ENCODE measurements at regions of chr3 and their contacts with region 1.

Region 1: GRCh38 chr3:163056874-163057497 is 1560.4 kb downstream of the OTOL1 start:
- DNase-seq: no peak
- ATAC-seq: no peak
- H3K4me3 ChIP-seq: no peak overlapping the region
- H3K4me3 Mint-ChIP-seq: no peak overlapping the region
- H3K27ac ChIP-seq: no peak overlapping the region
- H3K27ac Mint-ChIP-seq: no peak overlapping the region
- H3K4me1 ChIP-seq: no peaks in the 10 kb centered on the region
- H3K4me1 Mint-ChIP-seq: no peaks in the 10 kb centered on the region
- H3K27me3 ChIP-seq: no peaks in the 10 kb centered on the region
- H3K27me3 Mint-ChIP-seq: no peaks in the 10 kb centered on the region

Region 2: DNA sequence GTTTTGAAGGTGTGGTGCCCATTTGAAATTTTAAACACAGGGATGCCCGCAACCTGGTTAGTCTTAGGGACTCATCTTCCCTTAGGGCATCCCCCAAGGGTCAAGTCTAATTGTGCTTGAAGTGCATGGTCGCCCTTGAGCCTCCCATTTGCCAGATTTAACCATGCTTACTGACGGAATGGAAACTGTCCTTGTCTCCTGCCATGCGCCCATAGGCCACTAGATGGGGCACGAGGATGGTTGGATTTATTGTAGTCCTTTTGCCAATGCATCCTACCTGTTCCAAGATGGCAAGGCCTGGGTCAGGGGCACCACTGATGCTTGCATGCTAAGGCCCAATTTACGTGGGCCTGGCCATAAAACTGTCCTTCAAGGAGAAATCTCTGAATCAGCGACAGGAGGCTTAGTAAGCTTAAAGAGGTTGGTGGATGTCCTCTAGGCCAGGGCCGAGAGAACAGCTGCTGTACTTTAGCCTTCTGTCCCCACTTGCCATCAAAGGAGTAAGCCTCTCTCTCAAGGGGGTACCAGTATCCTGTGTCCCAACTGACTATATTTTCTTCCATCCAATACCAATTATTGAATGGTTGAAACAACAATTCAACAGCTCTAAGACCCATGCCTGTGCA is 1204.9 kb before region 1 on chr3:
- CTCF ChIA-PET with region 1: no interaction called
- POLR2A ChIA-PET with region 1: no interaction called
- intact Hi-C with region 1: loop called in 1 of 2 experiments (anchors 5 kb)
- DNase-seq: peak in 2 of 9 donors; percentile 5 to 35
- ATAC-seq: no peak
- H3K4me3 ChIP-seq: no peak overlapping the region
- H3K4me3 Mint-ChIP-seq: no peak overlapping the region
- H3K27ac ChIP-seq: no peak overlapping the region
- H3K27ac Mint-ChIP-seq: no peak overlapping the region
- H3K4me1 ChIP-seq: no peaks in the 10 kb centered on the region
- H3K4me1 Mint-ChIP-seq: peaks cover 0 to 2% (median 0%) of the 10 kb centered on the region in 7 donors
- H3K27me3 ChIP-seq: no peaks in the 10 kb centered on the region
- H3K27me3 Mint-ChIP-seq: no peaks in the 10 kb centered on the region

Region 3: DNA sequence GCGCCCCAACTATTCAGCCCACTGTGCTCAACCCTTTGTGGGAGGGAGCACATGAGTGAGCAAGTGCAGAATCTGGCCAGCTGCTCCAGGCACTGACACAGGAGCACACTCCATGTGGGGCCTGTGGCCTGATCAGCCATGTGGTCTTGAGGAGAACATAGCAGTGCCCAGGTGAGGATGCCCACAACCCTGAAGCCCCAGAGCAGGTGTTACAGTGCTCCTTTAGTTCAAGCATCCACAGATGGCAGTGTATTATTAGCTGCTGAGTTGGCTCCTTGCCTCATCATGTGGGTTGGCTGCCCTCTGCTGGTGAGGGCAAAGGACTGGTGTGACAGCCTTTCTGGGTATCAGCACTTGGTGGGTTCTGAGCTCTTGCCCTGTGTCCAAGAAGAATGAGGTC is 433.1 kb after region 1 on chr3:
- CTCF ChIA-PET with region 1: no interaction called
- POLR2A ChIA-PET with region 1: no interaction called
- intact Hi-C with region 1: loop called in 1 of 2 experiments (anchors 2 kb)
- DNase-seq: no peak
- ATAC-seq: peak; percentile 20
- H3K4me3 ChIP-seq: no peak overlapping the region
- H3K4me3 Mint-ChIP-seq: no peak overlapping the region
- H3K27ac ChIP-seq: no peak overlapping the region
- H3K27ac Mint-ChIP-seq: no peak overlapping the region
- H3K4me1 ChIP-seq: no peaks in the 10 kb centered on the region
- H3K4me1 Mint-ChIP-seq: no peaks in the 10 kb centered on the region
- H3K27me3 ChIP-seq: no peaks in the 10 kb centered on the region
- H3K27me3 Mint-ChIP-seq: no peaks in the 10 kb centered on the region